ENCODE measurements at regions of chr9 and their contacts with region 1.

Region 1: DNA sequence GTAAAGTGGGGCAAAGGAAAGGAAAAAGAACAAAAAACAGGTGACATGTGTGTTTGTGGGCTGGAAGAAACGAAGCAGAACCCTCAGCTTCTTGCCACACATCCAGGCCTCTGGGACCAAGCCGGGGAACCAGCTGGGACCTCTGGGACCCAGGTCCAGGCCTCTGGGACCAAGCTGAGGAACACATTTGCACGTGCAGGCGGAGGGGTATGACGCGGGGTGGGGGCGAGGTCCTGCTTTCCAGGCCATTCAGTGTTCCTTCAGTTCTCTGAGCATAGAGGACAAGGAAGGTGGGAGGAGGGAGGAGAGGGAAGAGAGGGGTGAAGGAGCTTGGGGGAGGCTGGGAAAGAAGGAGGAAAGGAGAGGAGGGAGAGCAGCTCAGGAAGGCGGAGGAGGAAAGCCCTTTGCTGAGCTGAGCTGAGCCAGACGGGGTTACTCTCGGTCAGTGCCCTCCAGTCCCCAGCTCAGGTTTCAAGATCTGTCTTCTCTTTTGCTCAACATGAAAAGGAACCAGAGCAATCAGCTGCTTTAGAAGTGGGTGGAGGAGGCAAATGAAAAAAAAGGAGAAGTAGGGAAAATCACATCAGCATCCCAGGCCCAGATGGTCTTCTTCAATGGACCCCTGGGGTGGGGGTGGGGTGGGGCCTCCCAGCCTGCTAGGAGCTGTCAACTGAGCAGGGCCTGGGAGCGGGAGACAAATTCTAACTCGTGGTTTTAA is 59.1 kb downstream of the ABCA1 start:
- DNase-seq: peak; percentile 25
- H3K4me3 ChIP-seq: no peak overlapping the region
- H3K27ac ChIP-seq: peak overlapping the region; percentile 22 to 51
- H3K4me1 ChIP-seq: peaks cover 4% of the 10 kb centered on the region
- H3K27me3 ChIP-seq: no peaks in the 10 kb centered on the region
- CTCF ChIP-seq: no peak
- POLR2A ChIP-seq: no peak

Region 2: GRCh38 chr9:104808035-104808614 is 60.7 kb before region 1 on chr9:
- intact Hi-C with region 1: no loop called
- DNase-seq: no peak
- H3K4me3 ChIP-seq: no peak overlapping the region
- H3K27ac ChIP-seq: no peak overlapping the region
- H3K4me1 ChIP-seq: no peaks in the 10 kb centered on the region
- H3K27me3 ChIP-seq: no peaks in the 10 kb centered on the region
- CTCF ChIP-seq: no peak
- POLR2A ChIP-seq: no peak

Region 3: DNA sequence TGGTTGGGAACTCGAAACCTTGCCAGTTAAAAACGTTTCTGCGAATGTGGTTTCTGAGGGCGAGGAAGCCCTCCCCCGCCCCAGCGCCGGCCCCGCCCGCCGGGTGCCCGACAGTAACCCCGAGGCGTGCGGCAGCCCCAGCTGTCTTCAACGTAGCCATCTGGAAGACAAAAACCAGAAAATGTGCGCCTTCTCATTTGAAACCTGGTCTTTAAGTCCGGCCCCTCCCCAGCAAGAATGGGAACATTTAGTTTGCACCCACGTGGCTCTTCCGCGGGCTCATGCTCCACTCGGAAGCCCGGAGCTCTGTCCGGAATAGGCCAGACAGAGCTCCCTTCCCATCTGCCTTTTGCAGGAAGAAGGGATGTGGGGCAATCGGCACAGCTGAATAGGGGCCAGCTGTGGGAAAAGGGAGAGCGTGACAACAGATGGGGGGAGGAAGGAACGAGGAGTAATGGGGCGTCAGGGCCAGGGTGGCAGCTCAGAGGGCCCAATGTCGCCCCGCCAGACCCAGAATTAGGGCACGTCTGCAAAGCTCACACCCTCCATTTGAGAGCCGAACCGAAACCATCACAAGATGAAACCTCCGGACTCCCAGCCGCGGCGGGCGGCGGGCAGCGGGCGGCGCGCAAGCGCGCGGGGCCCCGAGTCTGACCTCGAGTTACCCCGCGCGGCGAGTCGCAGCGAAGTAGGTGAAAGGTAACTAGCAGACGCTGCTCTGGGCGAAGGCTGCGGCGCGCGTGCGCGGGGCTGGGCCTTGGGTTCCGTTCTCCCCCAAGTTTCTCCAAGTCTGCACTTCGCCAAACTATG is 122.5 kb after region 1 on chr9:
- intact Hi-C with region 1: loop called (anchors 5 kb)
- DNase-seq: peak; percentile 80
- H3K4me3 ChIP-seq: peak overlapping the region; percentile 46 to 61
- H3K27ac ChIP-seq: peak overlapping the region; percentile 79 to 82
- H3K4me1 ChIP-seq: no peaks in the 10 kb centered on the region
- H3K27me3 ChIP-seq: no peaks in the 10 kb centered on the region
- CTCF ChIP-seq: peak in 1 of 4 experiments; percentile 6
- POLR2A ChIP-seq: no peak